ENCODE measurements at regions of chr3 and their contacts with region 1.

Region 1: GRCh38 chr3:141680620-141681389 is 57.3 kb upstream of the RNF7 start:
- DNase-seq: peak; percentile 88
- H3K4me3 ChIP-seq: peak overlapping the region in 1 of 3 experiments; percentile 3
- H3K27ac ChIP-seq: peak overlapping the region; percentile 72
- H3K4me1 ChIP-seq: peaks cover 35% of the 10 kb centered on the region
- H3K27me3 ChIP-seq: no peaks in the 10 kb centered on the region
- CTCF ChIP-seq: no peak
- POLR2A ChIP-seq: peak; percentile 50

Region 2: GRCh38 chr3:141303481-141304223 is 377.2 kb before region 1 on chr3:
- CTCF ChIA-PET with region 1: no interaction called
- POLR2A ChIA-PET with region 1: no interaction called
- dilution Hi-C with region 1: no loop called
- intact Hi-C with region 1: no loop called
- DNase-seq: peak; percentile 86
- H3K4me3 ChIP-seq: no peak overlapping the region
- H3K27ac ChIP-seq: no peak overlapping the region
- H3K4me1 ChIP-seq: no peaks in the 10 kb centered on the region
- H3K27me3 ChIP-seq: peaks cover 0 to 6% of the 10 kb centered on the region in 2 experiments
- CTCF ChIP-seq: peak; percentile 53 to 68
- POLR2A ChIP-seq: no peak

Region 3: DNA sequence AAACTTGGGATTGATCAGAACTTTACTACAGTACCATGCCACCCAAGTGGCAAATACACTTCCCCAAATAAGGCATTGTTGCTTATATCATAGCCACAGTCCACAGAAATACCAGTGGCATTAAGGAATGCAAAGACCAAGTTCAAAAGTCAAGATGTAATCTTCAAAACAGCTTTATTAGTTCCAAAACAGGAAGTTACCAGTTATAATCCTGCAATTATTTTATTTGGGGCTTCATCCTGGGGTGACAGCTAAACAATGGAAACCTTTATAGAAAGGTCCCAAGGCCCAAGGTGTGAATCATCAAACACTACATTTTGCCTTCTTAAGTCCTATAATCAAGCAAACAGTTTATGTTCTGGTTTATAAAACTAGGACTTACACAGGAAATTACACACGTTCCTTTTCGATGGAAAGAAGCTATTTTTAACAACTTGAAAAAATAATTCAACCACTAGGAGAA is 27.0 kb after region 1 on chr3:
- CTCF ChIA-PET with region 1: interaction called, 3 read pairs
- POLR2A ChIA-PET with region 1: no interaction called
- dilution Hi-C with region 1: no loop called
- intact Hi-C with region 1: loop called (anchors 1 kb)
- DNase-seq: peak; percentile 97
- H3K4me3 ChIP-seq: no peak overlapping the region
- H3K27ac ChIP-seq: peak overlapping the region; percentile 89
- H3K4me1 ChIP-seq: peaks cover 52% of the 10 kb centered on the region
- H3K27me3 ChIP-seq: no peaks in the 10 kb centered on the region
- CTCF ChIP-seq: no peak
- POLR2A ChIP-seq: peak; percentile 41